ENCODE measurements at regions of chr9 and their contacts with region 1.

Region 1: GRCh38 chr9:129884220-129885017 is 49.2 kb downstream of the USP20 start:
- DNase-seq: peak; percentile 63 to 97 (median 78)

Region 2: GRCh38 chr9:129835021-129835871 is 49.2 kb before region 1 on chr9 and contains the starts of genes C9orf78 and USP20:
- intact Hi-C with region 1: loop called (anchors 5 kb)
- DNase-seq: peak; percentile 88 to 100 (median 94)

Region 3: GRCh38 chr9:130042833-130043653 is 158.6 kb after region 1 on chr9 and contains the start of gene FNBP1:
- intact Hi-C with region 1: loop called (anchors 2 kb)
- DNase-seq: peak; percentile 66 to 97 (median 78)

Region 4: DNA sequence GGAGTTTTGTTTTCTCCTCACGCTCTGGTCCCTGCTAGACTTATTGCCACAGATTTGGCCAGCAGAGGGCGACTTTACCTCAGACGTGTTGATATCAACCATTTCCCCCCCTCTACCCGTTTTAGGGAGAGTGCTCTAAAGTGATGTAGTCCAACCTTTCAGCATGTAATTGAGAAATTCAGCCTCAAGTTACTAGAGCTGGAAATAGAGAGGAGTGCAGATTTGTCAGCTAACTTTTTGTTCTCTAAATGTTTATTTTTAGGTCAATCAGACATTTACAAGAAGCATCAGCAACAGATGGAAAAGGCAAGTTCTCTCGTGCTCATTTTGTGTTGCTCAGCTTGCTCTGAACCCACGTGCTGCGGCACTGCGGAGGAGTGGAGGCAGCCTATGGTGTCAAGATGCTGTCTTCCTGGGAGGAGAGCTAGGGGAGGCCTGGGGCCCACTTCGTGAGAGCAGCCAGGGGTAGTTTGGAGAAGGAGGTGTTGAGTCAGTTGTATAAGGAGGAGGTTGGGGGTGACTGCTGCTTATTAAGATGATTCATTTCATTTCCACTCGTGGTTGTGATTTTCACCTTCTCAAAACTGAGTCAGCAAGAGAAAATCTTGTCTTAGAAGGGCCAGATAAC is 222.9 kb after region 1 on chr9:
- intact Hi-C with region 1: loop called (anchors 10 kb)
- DNase-seq: peak; percentile 67 to 96 (median 90)

Region 5: DNA sequence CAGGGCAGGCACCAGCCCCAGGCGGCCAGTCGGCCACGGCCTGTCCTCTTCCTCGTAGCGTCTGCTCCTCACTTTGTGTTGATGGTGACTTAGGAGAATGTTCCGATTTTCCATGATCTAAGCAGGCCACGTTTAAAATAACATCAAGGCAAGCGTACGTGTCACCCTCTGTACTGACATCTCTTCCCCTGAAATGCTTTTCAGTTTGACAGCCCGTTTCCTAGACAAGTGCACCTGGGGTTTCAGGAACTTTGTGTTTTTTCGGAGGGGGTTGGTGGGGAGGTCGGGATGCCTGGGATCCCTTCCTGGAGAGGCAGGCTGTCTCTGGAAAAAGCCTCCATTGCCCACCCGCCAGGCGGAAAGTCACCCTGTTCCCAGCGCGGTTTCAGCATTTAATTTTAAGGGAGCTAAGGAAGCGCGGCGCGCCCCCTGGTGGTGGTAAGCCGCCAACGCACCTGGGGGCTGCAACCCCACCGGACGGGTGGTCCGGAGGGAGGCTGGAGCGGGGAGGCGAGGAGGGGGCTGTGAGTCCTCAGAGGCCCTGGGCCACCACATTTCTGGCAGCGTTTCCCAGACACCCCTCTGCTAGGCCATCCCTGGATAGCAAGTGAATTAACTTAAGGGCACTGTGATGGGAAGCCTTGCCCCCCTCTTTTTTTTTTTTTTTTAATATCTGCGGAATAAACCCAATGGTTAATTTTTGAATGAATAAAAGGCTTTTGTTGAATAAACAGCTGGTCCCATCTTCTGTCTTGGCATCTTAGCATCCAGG is 351.7 kb after region 1 on chr9:
- intact Hi-C with region 1: loop called (anchors 5 kb)
- DNase-seq: peak; percentile 56 to 94 (median 72)

Region 6: GRCh38 chr9:130640681-130641080 is 756.3 kb after region 1 on chr9:
- intact Hi-C with region 1: no loop called
- DNase-seq: peak in 3 of 10 donors; percentile 10 to 39 (median 27)